CD4-positive, alpha-beta T cell (primary cell): ENCODE measurements at regions of chr17 and their contacts with region 1.

Region 1: DNA sequence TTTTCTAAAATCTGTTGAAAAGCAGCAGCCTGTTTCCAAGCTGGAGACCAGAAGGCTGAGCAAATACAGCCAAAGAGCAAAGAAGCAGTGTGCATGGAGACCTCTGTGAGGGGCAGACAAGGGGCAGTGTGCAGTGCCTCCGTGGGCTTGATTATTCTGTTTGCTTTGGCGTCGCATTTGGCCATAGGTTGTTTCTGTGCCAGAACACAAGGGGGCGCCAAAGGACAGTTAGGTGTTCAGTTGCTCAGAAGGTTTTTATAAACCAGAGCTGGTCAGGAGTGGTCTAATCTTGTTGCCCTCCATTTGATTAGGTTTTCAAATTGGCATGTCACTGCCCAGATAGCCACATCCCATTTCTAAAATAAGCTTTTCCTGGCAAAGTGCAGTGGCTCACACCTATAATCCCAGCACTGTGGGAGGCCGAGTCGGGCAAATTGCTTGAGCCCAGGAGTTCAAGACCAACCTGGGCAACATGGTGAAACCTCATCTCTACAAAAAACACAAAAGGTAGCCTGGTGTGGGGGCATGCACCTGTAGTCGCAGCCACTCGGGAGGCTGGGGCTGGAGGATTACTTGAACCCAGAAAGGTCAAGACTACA is 10.6 kb downstream of the MYH3 start:
- DNase-seq: peak; percentile 58 to 88 (median 70)
- ATAC-seq: peak; percentile 73
- H3K4me3 ChIP-seq: no peak overlapping the region
- H3K4me3 Mint-ChIP-seq: no peak overlapping the region
- H3K27ac ChIP-seq: no peak overlapping the region
- H3K27ac Mint-ChIP-seq: no peak overlapping the region
- H3K4me1 ChIP-seq: peaks cover 4% of the 10 kb centered on the region
- H3K4me1 Mint-ChIP-seq: no peaks in the 10 kb centered on the region
- H3K27me3 ChIP-seq: no peaks in the 10 kb centered on the region
- H3K27me3 Mint-ChIP-seq: no peaks in the 10 kb centered on the region
- CTCF ChIP-seq: peak; percentile 91

Region 2: GRCh38 chr17:9644910-9645751 is 1001.4 kb before region 1 on chr17 and contains the start of gene USP43:
- CTCF ChIA-PET with region 1: no interaction called
- POLR2A ChIA-PET with region 1: no interaction called
- intact Hi-C with region 1: no loop called
- DNase-seq: peak in 4 of 14 experiments; percentile 4 to 36 (median 12)
- ATAC-seq: peak; percentile 32
- H3K4me3 ChIP-seq: peak within 1 kb of the TSS; percentile 52
- H3K4me3 Mint-ChIP-seq: peak within 1 kb of the TSS; percentile 82
- H3K27ac ChIP-seq: no peak within 1 kb of the TSS
- H3K27ac Mint-ChIP-seq: no peak within 1 kb of the TSS
- H3K4me1 ChIP-seq: peaks cover 17% of the 10 kb centered on the region
- H3K4me1 Mint-ChIP-seq: peaks cover 14% of the 10 kb centered on the region
- H3K27me3 ChIP-seq: peaks cover 37 to 44% of the 10 kb centered on the region in 2 experiments
- H3K27me3 Mint-ChIP-seq: peaks cover 66% of the 10 kb centered on the region
- CTCF ChIP-seq: no peak
- total RNA-seq, gene USP43: 0.08 to 0.17 TPM

Region 3: GRCh38 chr17:10729334-10730193 is 83.1 kb after region 1 on chr17 and contains the start of gene TMEM220:
- CTCF ChIA-PET with region 1: no interaction called
- POLR2A ChIA-PET with region 1: no interaction called
- intact Hi-C with region 1: loop called in 1 of 2 experiments (anchors 10 kb)
- DNase-seq: peak in 12 of 14 experiments; percentile 8 to 61 (median 25)
- ATAC-seq: peak; percentile 74
- H3K4me3 ChIP-seq: peak within 1 kb of the TSS; percentile 62
- H3K4me3 Mint-ChIP-seq: peak within 1 kb of the TSS; percentile 90
- H3K27ac ChIP-seq: peak within 1 kb of the TSS in 1 of 2 donors; percentile 5
- H3K27ac Mint-ChIP-seq: peak within 1 kb of the TSS; percentile 68
- H3K4me1 ChIP-seq: peaks cover 11% of the 10 kb centered on the region
- H3K4me1 Mint-ChIP-seq: peaks cover 13% of the 10 kb centered on the region
- H3K27me3 ChIP-seq: no peaks in the 10 kb centered on the region
- H3K27me3 Mint-ChIP-seq: no peaks in the 10 kb centered on the region
- CTCF ChIP-seq: no peak
- total RNA-seq, gene TMEM220: 2.9 to 3.2 TPM

Region 4: DNA sequence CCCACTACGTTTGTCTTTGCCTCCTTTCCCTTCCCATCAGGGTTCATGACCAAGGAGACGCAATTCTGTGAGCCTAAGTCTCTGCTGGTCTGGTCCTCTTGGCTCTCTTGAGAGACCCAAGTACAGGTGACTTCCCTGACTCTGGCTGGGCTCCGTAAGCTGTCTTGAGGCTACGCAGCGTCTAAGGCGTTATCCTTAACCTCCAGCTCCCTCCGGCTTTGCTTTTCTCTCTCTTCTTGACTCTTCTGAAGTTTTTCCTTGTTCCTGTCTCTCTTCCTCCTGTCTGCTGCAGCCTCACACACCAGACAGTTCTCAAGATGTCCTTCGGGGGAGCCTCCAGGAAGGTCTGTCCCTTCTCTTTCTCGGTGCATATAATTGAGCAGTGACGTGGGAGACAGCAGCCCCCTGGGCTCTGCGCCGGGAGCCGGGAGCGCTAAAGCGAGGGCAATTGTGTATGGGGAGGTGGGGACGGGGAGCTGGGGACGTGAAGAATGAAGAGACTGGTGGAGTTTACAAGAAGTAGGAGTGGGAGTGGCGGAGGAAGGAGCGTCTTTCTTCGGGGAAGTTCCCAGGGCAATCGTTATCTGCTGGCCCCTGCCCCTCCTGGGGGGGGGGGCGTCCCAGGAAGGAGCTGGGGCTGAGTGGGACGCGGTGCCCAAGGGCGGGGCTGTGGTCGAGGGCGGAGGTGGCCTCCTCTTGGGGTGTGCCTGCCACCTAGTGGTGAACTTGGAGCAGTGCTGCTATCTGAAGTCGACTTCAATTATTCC is 198.3 kb after region 1 on chr17:
- CTCF ChIA-PET with region 1: interaction called, 9 read pairs
- POLR2A ChIA-PET with region 1: interaction called, 4 read pairs
- intact Hi-C with region 1: loop called (anchors 1 kb)
- DNase-seq: peak; percentile 50 to 84 (median 64)
- ATAC-seq: peak; percentile 96
- H3K4me3 ChIP-seq: peak overlapping the region; percentile 50
- H3K4me3 Mint-ChIP-seq: peak overlapping the region; percentile 70
- H3K27ac ChIP-seq: no peak overlapping the region
- H3K27ac Mint-ChIP-seq: no peak overlapping the region
- H3K4me1 ChIP-seq: peaks cover 7% of the 10 kb centered on the region
- H3K4me1 Mint-ChIP-seq: peaks cover 10% of the 10 kb centered on the region
- H3K27me3 ChIP-seq: peaks cover 0 to 4% of the 10 kb centered on the region in 2 experiments
- H3K27me3 Mint-ChIP-seq: no peaks in the 10 kb centered on the region
- CTCF ChIP-seq: peak; percentile 97

Region 5: DNA sequence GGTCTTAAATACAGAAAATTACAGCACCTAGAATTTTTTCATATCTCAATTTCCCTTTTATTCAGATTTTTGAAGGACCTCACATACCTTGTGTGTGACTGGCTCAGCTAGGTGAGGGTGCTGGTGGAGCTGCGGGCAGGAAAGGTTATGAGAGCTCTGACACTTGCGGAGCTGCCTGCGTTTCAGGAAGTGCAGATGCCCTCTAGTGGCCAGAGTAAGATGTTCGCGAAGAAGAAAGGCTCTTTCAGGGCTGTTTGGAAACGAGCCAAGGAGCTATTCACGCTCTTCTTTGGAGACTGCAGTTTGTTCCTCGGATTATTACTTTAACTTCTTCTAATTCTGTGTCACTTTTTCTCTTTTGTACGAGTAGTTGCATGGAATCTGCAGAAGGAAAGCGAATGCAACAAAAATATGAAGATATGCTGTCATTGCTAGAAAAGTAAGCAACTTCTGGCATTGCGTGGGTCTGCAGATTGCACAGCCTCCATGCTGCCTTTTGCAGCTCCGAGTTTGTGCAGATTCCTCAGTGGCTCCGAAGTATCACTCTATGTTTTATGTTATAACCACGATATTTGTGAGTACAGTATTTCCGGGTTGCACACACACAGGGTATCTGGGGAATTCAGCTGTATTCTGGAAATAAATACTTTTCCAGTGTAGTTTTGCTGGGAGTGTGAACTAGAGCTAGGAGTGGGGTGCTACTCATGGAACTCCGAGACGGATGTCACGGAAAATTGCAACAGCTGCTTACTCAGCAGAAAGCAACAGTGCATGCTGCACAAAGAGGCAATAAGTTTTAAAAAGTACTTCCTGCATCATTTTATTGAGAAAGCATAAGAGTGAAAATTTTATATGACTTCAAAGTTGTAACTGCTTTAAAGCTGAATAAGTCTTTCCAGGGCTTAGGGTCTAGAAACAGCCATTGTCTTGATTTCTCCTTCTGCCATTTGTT is 998.0 kb after region 1 on chr17:
- CTCF ChIA-PET with region 1: no interaction called
- POLR2A ChIA-PET with region 1: no interaction called
- intact Hi-C with region 1: loop called in 1 of 2 experiments (anchors 5 kb)
- DNase-seq: peak in 10 of 14 experiments; percentile 1 to 58 (median 16)
- ATAC-seq: no peak
- H3K4me3 ChIP-seq: no peak overlapping the region
- H3K4me3 Mint-ChIP-seq: no peak overlapping the region
- H3K27ac ChIP-seq: no peak overlapping the region
- H3K27ac Mint-ChIP-seq: no peak overlapping the region
- H3K4me1 ChIP-seq: no peaks in the 10 kb centered on the region
- H3K4me1 Mint-ChIP-seq: no peaks in the 10 kb centered on the region
- H3K27me3 ChIP-seq: no peaks in the 10 kb centered on the region
- H3K27me3 Mint-ChIP-seq: no peaks in the 10 kb centered on the region
- CTCF ChIP-seq: peak; percentile 66